Calu3 (cell line): ENCODE measurements at regions of chr3 and their contacts with region 1.

Region 1: DNA sequence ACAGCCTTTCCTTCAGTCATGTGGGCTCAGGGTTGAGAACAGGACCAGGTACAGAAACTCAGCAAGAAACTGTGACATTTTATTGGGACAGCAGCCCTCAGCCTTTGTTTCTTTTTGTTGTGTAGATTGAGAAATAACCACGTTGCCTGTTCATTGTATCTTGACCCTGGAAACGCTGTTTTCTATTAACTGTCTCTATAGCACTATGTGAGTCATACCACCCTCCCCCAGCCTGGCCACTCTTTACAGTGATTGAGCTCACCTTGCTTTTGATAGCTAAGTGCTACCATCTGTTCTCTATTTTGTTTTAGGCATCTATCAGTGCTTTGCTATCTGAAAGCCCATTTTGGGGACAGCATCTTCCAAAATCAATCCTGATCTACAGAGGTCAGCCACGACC is 127.9 kb downstream of the CD47 start:
- DNase-seq: peak; percentile 66
- H3K4me3 Mint-ChIP-seq: peak overlapping the region; percentile 24
- H3K27ac Mint-ChIP-seq: peak overlapping the region; percentile 69
- H3K4me1 Mint-ChIP-seq: peaks cover 31% of the 10 kb centered on the region
- H3K27me3 Mint-ChIP-seq: no peaks in the 10 kb centered on the region
- CTCF ChIP-seq: no peak

Region 2: GRCh38 chr3:107999215-107999775 is 36.3 kb after region 1 on chr3:
- CTCF ChIA-PET with region 1: no interaction called
- intact Hi-C with region 1: loop called (anchors 5 kb)
- DNase-seq: peak; percentile 62
- H3K4me3 Mint-ChIP-seq: peak overlapping the region; percentile 11
- H3K27ac Mint-ChIP-seq: no peak overlapping the region
- H3K4me1 Mint-ChIP-seq: peaks cover 48% of the 10 kb centered on the region
- H3K27me3 Mint-ChIP-seq: peaks cover 14% of the 10 kb centered on the region
- CTCF ChIP-seq: no peak

Region 3: DNA sequence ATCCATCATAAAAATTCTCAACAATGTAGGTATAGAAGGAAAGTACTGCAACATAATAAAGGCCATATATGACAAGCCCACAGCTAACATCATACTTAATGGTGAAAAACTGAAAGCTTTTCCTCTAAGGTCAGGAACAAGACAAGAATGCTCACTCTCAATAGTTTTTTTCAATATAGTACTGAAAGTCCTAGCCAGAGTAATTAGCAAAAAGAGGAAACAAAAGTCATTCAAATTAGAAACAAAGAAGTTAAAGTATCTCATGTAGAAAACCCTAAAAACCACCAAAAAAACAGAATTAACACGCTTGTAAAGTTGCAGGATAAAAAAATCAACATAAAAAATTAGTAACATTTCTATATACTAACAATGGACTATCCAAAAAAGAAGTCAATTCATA is 485.6 kb after region 1 on chr3:
- CTCF ChIA-PET with region 1: no interaction called
- intact Hi-C with region 1: no loop called
- DNase-seq: no peak
- H3K4me3 Mint-ChIP-seq: no peak overlapping the region
- H3K27ac Mint-ChIP-seq: no peak overlapping the region
- H3K4me1 Mint-ChIP-seq: no peaks in the 10 kb centered on the region
- H3K27me3 Mint-ChIP-seq: no peaks in the 10 kb centered on the region
- CTCF ChIP-seq: no peak